ENCODE measurements at regions of chr9 and their contacts with region 1.

Region 1: GRCh38 chr9:116101516-116101915 is 52.1 kb upstream of the PAPPA start:
- DNase-seq: peak; percentile 77
- H3K4me3 Mint-ChIP-seq: no peak overlapping the region
- H3K27ac Mint-ChIP-seq: peak overlapping the region; percentile 52
- H3K4me1 Mint-ChIP-seq: peaks cover 48% of the 10 kb centered on the region
- H3K27me3 Mint-ChIP-seq: no peaks in the 10 kb centered on the region
- CTCF ChIP-seq: no peak

Region 2: DNA sequence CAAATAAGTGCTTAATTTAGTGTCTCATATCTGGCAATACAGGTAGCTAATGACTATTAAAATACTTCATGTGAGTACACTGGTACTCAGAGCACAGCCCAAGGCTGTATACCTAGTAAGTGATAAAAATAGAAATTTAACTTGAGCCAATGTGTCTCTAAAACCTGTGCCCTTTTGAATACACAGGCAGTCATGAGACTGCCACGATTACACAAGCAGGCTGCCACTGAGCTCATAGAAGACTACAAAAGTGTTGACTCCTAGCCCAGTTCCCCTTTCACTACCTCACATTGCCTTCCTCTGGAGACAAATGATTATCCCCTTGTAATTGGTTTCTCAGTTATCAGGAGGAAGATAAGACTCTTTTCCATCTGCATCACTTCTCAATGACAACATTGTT is 14.3 kb before region 1 on chr9:
- CTCF ChIA-PET with region 1: no interaction called
- POLR2A ChIA-PET with region 1: interaction called, 20 read pairs
- intact Hi-C with region 1: no loop called
- DNase-seq: peak; percentile 81
- H3K4me3 Mint-ChIP-seq: peak overlapping the region; percentile 22
- H3K27ac Mint-ChIP-seq: peak overlapping the region; percentile 68
- H3K4me1 Mint-ChIP-seq: peaks cover 16% of the 10 kb centered on the region
- H3K27me3 Mint-ChIP-seq: no peaks in the 10 kb centered on the region
- CTCF ChIP-seq: no peak

Region 3: DNA sequence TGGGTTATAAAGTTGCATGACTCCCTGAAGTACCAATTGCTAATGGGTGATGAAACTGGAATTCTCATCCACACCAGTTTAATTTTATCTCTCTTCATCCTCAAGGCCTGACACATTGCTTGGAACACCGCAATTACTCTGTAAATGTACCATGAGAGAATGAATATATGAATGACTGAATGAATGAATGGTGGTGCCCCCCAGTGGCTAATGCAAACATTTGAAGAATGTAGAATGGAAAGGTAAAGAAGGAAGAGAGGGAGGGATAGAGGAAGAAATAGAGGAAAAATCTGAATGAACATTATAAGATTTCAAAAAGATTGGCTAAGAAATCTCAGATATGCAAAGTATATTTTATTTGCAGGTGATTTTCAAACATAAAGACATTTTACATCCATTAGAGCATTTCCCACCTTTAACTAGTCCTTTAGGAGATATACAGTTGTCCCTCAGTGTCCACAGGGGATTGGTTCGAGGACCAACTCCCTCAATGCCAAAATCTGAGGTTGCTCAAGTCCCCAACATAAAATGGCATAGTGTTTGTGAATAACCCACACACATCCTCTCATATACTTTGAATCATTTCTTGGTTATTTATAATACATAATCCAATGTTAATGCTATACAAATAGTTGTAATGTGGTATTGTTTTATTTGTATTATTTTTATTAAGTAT is 65.3 kb after region 1 on chr9:
- CTCF ChIA-PET with region 1: no interaction called
- POLR2A ChIA-PET with region 1: no interaction called
- intact Hi-C with region 1: no loop called
- DNase-seq: no peak
- H3K4me3 Mint-ChIP-seq: no peak overlapping the region
- H3K27ac Mint-ChIP-seq: no peak overlapping the region
- H3K4me1 Mint-ChIP-seq: peaks cover 16% of the 10 kb centered on the region
- H3K27me3 Mint-ChIP-seq: no peaks in the 10 kb centered on the region
- CTCF ChIP-seq: peak; percentile 19

Measured in MCF 10A (cell line).